RWPE1 (cell line): ENCODE measurements at regions of chr2 and their contacts with region 1.

Region 1: GRCh38 chr2:177332041-177332991 is 60.3 kb upstream of the AGPS start:
- DNase-seq: peak; percentile 41
- H3K27ac ChIP-seq: no peak overlapping the region
- CTCF ChIP-seq: peak; percentile 65

Region 2: GRCh38 chr2:176206682-176207081 is 1125.6 kb before region 1 on chr2:
- CTCF ChIA-PET with region 1: no interaction called
- POLR2A ChIA-PET with region 1: no interaction called
- DNase-seq: no peak
- H3K27ac ChIP-seq: no peak overlapping the region
- CTCF ChIP-seq: no peak

Region 3: GRCh38 chr2:177520356-177520723 is 188.0 kb after region 1 on chr2:
- CTCF ChIA-PET with region 1: interaction called, 11 read pairs
- POLR2A ChIA-PET with region 1: no interaction called
- DNase-seq: no peak
- H3K27ac ChIP-seq: no peak overlapping the region
- CTCF ChIP-seq: no peak